A673 (cell line): ENCODE measurements at regions of chr7 and their contacts with region 1.

Region 1: GRCh38 chr7:7335215-7335614 is 152.9 kb downstream of the C1GALT1 start:
- DNase-seq: no peak
- H3K4me3 ChIP-seq: no peak overlapping the region
- H3K27ac ChIP-seq: no peak overlapping the region
- H3K4me1 ChIP-seq: no peaks in the 10 kb centered on the region
- H3K27me3 ChIP-seq: peaks cover 30% of the 10 kb centered on the region
- CTCF ChIP-seq: no peak

Region 2: DNA sequence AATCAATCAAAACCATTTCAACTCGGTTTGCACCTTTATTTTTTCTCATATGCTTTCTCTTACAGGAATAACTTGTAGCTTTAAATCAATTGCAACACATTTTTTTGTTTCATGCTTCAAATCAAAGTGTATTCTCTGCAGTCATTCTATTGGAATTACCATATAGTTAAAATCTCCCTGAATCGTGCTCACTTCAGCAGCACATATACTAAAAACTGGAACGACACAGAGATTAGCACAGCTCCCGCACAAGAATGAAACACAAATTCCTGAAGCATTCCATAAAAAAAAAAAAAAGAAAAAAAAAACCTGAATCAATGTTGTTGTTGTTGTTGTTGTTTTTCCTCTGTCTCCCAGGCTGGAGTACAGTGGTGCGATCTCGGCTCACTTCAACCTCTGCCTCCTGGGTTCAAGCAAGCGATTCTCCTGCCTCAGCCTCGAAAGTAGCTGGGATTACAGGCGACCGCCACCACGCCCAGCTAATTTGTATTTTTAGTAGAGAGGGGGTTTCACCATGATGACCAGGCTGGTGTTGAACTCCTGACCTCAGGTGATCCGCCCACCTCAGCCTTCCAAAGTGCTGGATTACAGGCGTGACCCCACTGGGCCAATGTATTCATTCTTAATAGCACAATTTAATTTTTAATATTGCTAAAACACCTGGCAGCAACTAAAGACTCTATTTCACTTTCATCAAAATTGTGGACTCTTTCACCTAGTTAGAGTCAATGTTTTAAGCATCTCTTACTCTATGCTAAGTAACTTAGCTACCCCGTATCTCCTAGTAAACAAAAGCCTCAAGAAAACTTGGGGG is 1277.7 kb before region 1 on chr7:
- CTCF ChIA-PET with region 1: no interaction called
- POLR2A ChIA-PET with region 1: no interaction called
- intact Hi-C with region 1: no loop called
- DNase-seq: no peak
- H3K4me3 ChIP-seq: peak overlapping the region; percentile 89
- H3K27ac ChIP-seq: peak overlapping the region; percentile 11
- H3K4me1 ChIP-seq: peaks cover 3% of the 10 kb centered on the region
- H3K27me3 ChIP-seq: no peaks in the 10 kb centered on the region
- CTCF ChIP-seq: no peak

Region 3: DNA sequence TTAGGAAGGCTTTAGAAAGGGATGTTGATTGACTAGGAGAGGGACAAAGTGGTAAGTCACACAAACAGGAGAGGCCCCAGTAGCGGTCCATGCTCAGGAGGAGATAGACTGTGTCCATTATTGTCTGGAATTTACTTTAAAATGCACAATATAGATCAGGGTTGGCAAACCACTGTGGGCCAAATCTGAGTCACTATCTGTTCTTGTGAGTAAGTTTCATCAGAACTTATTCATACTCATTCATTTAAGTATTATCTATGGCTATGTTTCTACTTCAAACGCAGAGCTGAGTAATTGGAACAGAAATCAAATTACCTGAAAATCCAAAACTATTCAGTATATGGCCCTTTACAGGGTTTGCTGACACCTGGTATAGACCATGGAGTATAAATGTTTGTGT is 33.9 kb after region 1 on chr7:
- CTCF ChIA-PET with region 1: interaction called, 10 read pairs
- POLR2A ChIA-PET with region 1: no interaction called
- intact Hi-C with region 1: no loop called
- DNase-seq: no peak
- H3K4me3 ChIP-seq: no peak overlapping the region
- H3K27ac ChIP-seq: no peak overlapping the region
- H3K4me1 ChIP-seq: no peaks in the 10 kb centered on the region
- H3K27me3 ChIP-seq: peaks cover 5% of the 10 kb centered on the region
- CTCF ChIP-seq: no peak